Psoas muscle (tissue), 8 donors: ENCODE measurements at regions of chr18 and their contacts with region 1.

Region 1: GRCh38 chr18:31685097-31686082 is 1.0 kb upstream of the B4GALT6 start:
- DNase-seq: peak; percentile 66 to 82
- ATAC-seq: peak; percentile 90 to 96 (median 92)
- H3K4me3 ChIP-seq: peak overlapping the region; percentile 70
- H3K27ac ChIP-seq: peak overlapping the region; percentile 79
- H3K4me1 ChIP-seq: peaks cover 9% of the 10 kb centered on the region
- H3K27me3 ChIP-seq: no peaks in the 10 kb centered on the region
- CTCF ChIP-seq: peak; percentile 52

Region 2: GRCh38 chr18:31637445-31637844 is 47.9 kb before region 1 on chr18:
- intact Hi-C with region 1: loop called in 1 of 2 experiments (anchors 5 kb)
- DNase-seq: no peak
- ATAC-seq: no peak
- H3K4me3 ChIP-seq: no peak overlapping the region
- H3K27ac ChIP-seq: no peak overlapping the region
- H3K4me1 ChIP-seq: no peaks in the 10 kb centered on the region
- H3K27me3 ChIP-seq: no peaks in the 10 kb centered on the region
- CTCF ChIP-seq: no peak

Region 3: DNA sequence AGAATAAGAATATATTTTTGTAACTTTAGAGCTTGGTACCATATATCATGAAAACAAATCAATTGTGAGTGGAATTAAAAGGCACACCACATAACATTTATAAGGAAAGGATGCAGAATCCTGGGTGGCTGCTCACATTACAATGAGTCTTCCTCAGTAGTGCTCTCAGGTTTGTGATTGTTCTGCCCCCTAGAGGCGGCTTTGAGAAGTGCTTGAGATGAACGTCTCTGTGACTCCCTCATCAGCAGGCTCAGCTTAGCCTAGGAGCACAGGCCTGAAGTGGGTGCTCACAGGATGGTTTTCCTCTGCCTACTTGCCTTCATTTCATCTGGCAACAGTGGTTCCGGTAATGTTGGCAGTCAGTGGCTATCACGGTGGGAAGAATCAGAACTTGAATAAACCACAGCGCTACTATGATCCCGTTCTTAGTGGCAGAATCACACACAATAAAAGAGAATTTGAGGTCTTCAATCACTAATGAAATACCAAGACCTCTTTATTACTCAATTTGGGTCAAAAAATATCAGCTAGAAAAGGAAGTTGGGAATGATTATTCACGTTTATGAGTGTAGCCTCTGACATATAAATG is 37.1 kb after region 1 on chr18:
- intact Hi-C with region 1: loop called in 1 of 2 experiments (anchors 5 kb)
- DNase-seq: peak; percentile 71 to 81
- ATAC-seq: peak; percentile 81 to 89 (median 86)
- H3K4me3 ChIP-seq: no peak overlapping the region
- H3K27ac ChIP-seq: no peak overlapping the region
- H3K4me1 ChIP-seq: peaks cover 15% of the 10 kb centered on the region
- H3K27me3 ChIP-seq: no peaks in the 10 kb centered on the region
- CTCF ChIP-seq: peak; percentile 90

Region 4: DNA sequence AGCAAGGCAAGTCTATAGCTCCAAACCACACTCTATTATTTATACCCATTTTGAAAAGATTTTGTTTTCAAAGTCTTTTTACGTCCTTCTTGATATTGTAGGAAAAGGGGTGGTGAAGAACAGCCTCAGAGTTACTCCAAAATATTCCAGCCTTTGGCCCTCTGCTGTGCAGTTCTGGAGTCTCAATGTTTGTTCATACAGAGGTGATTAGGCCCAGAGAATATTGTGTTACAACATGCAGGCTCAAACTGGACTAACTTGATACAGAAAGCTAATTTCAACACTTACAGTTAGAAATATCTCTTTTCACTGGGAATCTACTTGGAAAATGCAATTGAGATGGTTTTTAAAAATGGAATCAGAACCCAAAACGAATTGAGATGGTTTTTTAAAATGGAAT is 115.7 kb after region 1 on chr18:
- intact Hi-C with region 1: no loop called
- DNase-seq: no peak
- ATAC-seq: no peak
- H3K4me3 ChIP-seq: no peak overlapping the region
- H3K27ac ChIP-seq: no peak overlapping the region
- H3K4me1 ChIP-seq: no peaks in the 10 kb centered on the region
- H3K27me3 ChIP-seq: no peaks in the 10 kb centered on the region
- CTCF ChIP-seq: no peak